Endothelial cell of umbilical vein (primary cell): ENCODE measurements at regions of chr5 and their contacts with region 1.

Region 1: GRCh38 chr5:142611154-142611553 is 74.7 kb downstream of the FGF1 start:
- DNase-seq: peak; percentile 74
- H3K4me3 ChIP-seq: no peak overlapping the region
- H3K27ac ChIP-seq: no peak overlapping the region
- H3K4me1 ChIP-seq: no peaks in the 10 kb centered on the region
- H3K27me3 ChIP-seq: peaks cover 2 to 27% of the 10 kb centered on the region in 2 experiments
- CTCF ChIP-seq: peak; percentile 87 to 90
- POLR2A ChIP-seq: no peak

Region 2: GRCh38 chr5:142881076-142881783 is 270.1 kb after region 1 on chr5:
- CTCF ChIA-PET with region 1: no interaction called
- POLR2A ChIA-PET with region 1: no interaction called
- dilution Hi-C with region 1: no loop called
- intact Hi-C with region 1: loop called (anchors 5 kb)
- DNase-seq: no peak
- H3K4me3 ChIP-seq: no peak overlapping the region
- H3K27ac ChIP-seq: no peak overlapping the region
- H3K4me1 ChIP-seq: peaks cover 18% of the 10 kb centered on the region
- H3K27me3 ChIP-seq: no peaks in the 10 kb centered on the region
- CTCF ChIP-seq: no peak
- POLR2A ChIP-seq: no peak